ENCODE measurements at regions of chr1 and their contacts with region 1.

Region 1: GRCh38 chr1:72379072-72379471 is 96.7 kb upstream of the NEGR1 start:
- DNase-seq: no peak
- H3K4me3 ChIP-seq: no peak overlapping the region
- H3K27ac ChIP-seq: no peak overlapping the region
- H3K4me1 ChIP-seq: no peaks in the 10 kb centered on the region
- H3K27me3 ChIP-seq: no peaks in the 10 kb centered on the region
- CTCF ChIP-seq: no peak
- EP300 ChIP-seq: no peak
- POLR2A ChIP-seq: no peak

Region 2: DNA sequence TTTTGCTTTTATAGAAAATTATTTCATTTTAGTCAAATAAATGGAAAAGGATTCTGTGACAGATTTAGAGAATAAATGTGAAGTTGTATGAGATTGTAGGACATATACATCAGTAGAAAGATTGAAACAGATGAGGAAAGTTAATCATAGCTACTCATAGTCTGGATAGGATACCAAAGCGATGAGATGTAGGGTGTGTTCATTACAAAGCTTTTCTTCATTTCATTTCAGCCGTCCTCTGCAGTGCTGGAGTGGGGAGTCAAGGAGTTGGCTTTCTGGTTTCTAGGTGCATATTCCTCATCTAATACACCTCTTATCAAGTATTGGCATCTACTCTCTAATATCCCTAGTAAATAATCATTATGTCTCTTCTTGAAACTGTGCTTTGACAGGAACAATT is 52.7 kb after region 1 on chr1:
- intact Hi-C with region 1: loop called in 1 of 4 experiments (anchors 2 kb)
- DNase-seq: no peak
- H3K4me3 ChIP-seq: no peak overlapping the region
- H3K27ac ChIP-seq: no peak overlapping the region
- H3K4me1 ChIP-seq: no peaks in the 10 kb centered on the region
- H3K27me3 ChIP-seq: no peaks in the 10 kb centered on the region
- CTCF ChIP-seq: no peak
- EP300 ChIP-seq: no peak
- POLR2A ChIP-seq: no peak

Measured in ovary (tissue), 10 donors.